Endothelial cell of umbilical vein (primary cell): ENCODE measurements at regions of chr17 and their contacts with region 1.

Region 1: GRCh38 chr17:1628856-1629646 is 417 bp upstream of the SLC43A2 start:
- DNase-seq: peak; percentile 94
- H3K4me3 ChIP-seq: peak overlapping the region; percentile 35 to 87 (median 53)
- H3K27ac ChIP-seq: peak overlapping the region; percentile 53
- H3K4me1 ChIP-seq: peaks cover 35% of the 10 kb centered on the region
- H3K27me3 ChIP-seq: no peaks in the 10 kb centered on the region
- CTCF ChIP-seq: peak in 1 of 2 donors; percentile 34
- POLR2A ChIP-seq: peak; percentile 37

Region 2: DNA sequence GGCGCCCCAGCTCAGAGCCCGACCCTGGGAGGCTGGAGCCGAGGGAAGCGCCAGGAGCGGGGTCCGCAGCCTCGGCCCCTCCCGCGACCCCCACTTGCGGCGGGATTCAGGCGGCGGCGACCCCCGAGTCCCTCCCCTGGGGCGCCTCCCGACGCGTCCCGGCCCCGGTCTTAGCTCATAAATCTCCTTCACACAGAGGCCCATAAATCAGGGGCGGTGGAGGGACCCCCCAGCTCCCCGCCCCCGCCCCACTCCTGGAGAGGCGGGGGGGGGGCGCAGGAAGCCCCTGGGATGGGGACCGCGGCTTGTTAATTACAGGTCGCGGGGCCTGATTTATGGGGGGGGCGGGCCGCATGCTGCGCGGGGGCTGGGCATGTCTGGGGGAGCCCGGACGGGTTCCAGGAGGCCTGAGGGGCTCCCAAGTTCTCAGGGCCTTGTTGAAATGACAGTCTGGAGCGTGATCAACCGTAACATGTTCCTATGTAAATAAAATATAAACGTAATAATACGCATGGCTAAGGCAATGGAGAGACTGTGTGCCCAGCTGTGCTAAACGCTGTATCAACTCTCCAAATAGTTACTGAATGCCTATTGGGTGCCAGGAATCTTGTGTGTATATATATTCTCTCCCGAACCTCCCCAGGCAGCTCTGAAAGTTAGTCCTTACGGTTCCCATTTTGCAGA is 368.8 kb before region 1 on chr17:
- CTCF ChIA-PET with region 1: interaction called, 9 read pairs
- POLR2A ChIA-PET with region 1: no interaction called
- dilution Hi-C with region 1: no loop called
- intact Hi-C with region 1: loop called (anchors 5 kb)
- DNase-seq: no peak
- H3K4me3 ChIP-seq: peak overlapping the region in 2 of 3 experiments; percentile 31 to 32
- H3K27ac ChIP-seq: no peak overlapping the region
- H3K4me1 ChIP-seq: no peaks in the 10 kb centered on the region
- H3K27me3 ChIP-seq: peaks cover 2 to 3% of the 10 kb centered on the region in 2 experiments
- CTCF ChIP-seq: no peak
- POLR2A ChIP-seq: no peak

Region 3: DNA sequence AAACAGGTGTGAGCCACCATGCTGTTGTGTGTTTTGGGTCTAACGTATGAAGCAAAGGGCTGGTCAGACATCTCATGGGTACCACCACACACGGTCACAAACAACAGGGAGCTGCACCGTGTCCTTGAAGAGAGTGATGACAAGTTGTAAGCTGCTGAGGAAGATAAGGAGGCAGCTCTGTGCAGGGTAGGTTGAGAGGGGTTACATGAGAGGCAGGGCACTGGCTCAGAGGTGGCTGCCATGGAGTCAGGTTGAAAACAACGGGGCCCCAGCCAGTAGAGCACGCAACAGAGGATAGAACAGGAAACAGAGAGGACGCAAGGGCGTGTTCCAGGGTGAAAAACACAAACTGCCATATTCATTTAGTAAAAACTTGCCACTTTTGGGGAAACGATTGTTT is 297.3 kb before region 1 on chr17:
- CTCF ChIA-PET with region 1: no interaction called
- POLR2A ChIA-PET with region 1: no interaction called
- dilution Hi-C with region 1: no loop called
- intact Hi-C with region 1: no loop called
- DNase-seq: no peak
- H3K4me3 ChIP-seq: no peak overlapping the region
- H3K27ac ChIP-seq: no peak overlapping the region
- H3K4me1 ChIP-seq: no peaks in the 10 kb centered on the region
- H3K27me3 ChIP-seq: no peaks in the 10 kb centered on the region
- CTCF ChIP-seq: no peak
- POLR2A ChIP-seq: no peak

Region 4: DNA sequence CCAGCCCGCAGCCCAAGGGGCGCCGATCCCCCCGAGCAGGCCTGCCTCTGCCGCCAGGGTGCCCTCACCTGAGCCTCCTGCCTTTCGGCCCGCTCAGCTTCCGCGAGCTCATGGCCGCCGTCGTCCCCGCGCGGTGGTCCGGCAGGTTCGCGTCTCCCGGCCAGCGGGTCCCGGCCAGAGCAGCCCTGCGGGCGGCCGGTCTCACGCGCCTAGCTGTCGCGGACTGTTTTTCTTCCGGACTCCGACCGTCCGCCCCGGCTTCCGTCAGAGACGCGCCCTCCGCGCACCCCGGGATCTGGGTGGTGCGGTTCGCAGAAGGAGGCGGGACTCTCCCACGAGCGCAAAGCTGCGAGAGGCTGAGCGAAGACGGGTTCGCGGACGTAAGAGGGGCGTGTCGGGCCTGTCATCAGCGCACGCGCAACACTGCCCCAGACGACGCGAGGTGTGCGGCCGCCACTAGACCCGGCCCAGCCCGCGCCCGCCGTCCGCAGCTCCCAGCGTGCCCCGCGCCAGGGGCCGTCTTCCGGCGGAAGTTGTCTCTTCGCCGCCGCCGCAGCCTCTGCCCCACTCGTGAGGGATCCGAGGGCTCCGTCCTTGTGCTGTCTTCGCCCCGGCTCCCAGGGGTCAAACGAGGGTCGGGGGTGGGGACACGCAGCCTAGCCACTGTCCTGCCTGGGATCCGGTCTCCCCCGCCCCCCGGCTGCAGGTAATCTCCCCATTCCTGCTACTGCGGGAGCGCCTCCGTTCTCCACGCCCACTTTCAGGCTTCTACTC is 112.5 kb before region 1 on chr17 and contains the start of gene INPP5K:
- CTCF ChIA-PET with region 1: interaction called, 11 read pairs
- POLR2A ChIA-PET with region 1: no interaction called
- dilution Hi-C with region 1: no loop called
- intact Hi-C with region 1: no loop called
- DNase-seq: peak; percentile 98
- H3K4me3 ChIP-seq: peak within 1 kb of the TSS; percentile 77 to 98 (median 89)
- H3K27ac ChIP-seq: peak within 1 kb of the TSS; percentile 75
- H3K4me1 ChIP-seq: peaks cover 23% of the 10 kb centered on the region
- H3K27me3 ChIP-seq: no peaks in the 10 kb centered on the region
- CTCF ChIP-seq: no peak
- POLR2A ChIP-seq: peak; percentile 86
- total RNA-seq, gene INPP5K: 41.3 and 44.2 TPM in 2 replicates

Region 5: GRCh38 chr17:1566545-1567199 is 62.4 kb before region 1 on chr17:
- CTCF ChIA-PET with region 1: interaction called, 459 read pairs
- POLR2A ChIA-PET with region 1: no interaction called
- dilution Hi-C with region 1: no loop called
- intact Hi-C with region 1: no loop called
- DNase-seq: no peak
- H3K4me3 ChIP-seq: no peak overlapping the region
- H3K27ac ChIP-seq: no peak overlapping the region
- H3K4me1 ChIP-seq: peaks cover under 1% of the 10 kb centered on the region
- H3K27me3 ChIP-seq: no peaks in the 10 kb centered on the region
- CTCF ChIP-seq: no peak
- POLR2A ChIP-seq: no peak

Region 6: GRCh38 chr17:1590031-1590748 is 38.9 kb before region 1 on chr17:
- CTCF ChIA-PET with region 1: interaction called, 17 read pairs
- POLR2A ChIA-PET with region 1: no interaction called
- dilution Hi-C with region 1: no loop called
- intact Hi-C with region 1: loop called (anchors 1 kb)
- DNase-seq: peak; percentile 95
- H3K4me3 ChIP-seq: no peak overlapping the region
- H3K27ac ChIP-seq: peak overlapping the region; percentile 73
- H3K4me1 ChIP-seq: peaks cover 18% of the 10 kb centered on the region
- H3K27me3 ChIP-seq: no peaks in the 10 kb centered on the region
- CTCF ChIP-seq: no peak
- POLR2A ChIP-seq: peak; percentile 58

Region 7: DNA sequence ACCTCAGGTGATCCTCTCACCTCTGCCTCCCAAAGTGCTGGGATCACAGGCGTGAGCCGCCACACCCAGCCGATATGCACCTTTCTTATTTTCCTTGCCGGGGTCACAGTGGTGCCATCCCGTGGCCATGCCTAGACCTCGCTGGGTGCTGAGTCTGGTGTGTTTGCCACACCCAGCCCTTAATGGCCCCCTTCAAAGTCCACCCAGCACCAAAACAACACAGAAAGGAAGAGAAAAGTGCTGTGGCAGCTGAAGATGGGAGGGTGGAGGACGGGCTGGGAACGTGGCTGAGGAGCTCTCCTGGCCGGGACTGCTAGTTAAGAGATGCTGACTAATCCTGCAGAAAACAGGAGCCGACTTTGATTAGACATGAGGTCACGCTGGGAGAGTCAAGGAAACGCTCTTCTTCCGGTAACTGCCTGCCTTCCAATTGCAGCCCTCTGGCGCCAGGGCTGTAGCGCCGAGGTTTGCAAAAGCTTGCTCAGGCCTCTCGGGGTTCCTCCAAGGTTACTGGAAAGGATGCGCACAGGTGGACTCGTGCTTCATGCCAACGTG is 11.4 kb before region 1 on chr17:
- CTCF ChIA-PET with region 1: interaction called, 26 read pairs
- POLR2A ChIA-PET with region 1: no interaction called
- dilution Hi-C with region 1: no loop called
- intact Hi-C with region 1: loop called (anchors 1 kb)
- DNase-seq: peak; percentile 87
- H3K4me3 ChIP-seq: no peak overlapping the region
- H3K27ac ChIP-seq: peak overlapping the region; percentile 80
- H3K4me1 ChIP-seq: peaks cover 19% of the 10 kb centered on the region
- H3K27me3 ChIP-seq: no peaks in the 10 kb centered on the region
- CTCF ChIP-seq: no peak
- POLR2A ChIP-seq: peak; percentile 52

Region 8: DNA sequence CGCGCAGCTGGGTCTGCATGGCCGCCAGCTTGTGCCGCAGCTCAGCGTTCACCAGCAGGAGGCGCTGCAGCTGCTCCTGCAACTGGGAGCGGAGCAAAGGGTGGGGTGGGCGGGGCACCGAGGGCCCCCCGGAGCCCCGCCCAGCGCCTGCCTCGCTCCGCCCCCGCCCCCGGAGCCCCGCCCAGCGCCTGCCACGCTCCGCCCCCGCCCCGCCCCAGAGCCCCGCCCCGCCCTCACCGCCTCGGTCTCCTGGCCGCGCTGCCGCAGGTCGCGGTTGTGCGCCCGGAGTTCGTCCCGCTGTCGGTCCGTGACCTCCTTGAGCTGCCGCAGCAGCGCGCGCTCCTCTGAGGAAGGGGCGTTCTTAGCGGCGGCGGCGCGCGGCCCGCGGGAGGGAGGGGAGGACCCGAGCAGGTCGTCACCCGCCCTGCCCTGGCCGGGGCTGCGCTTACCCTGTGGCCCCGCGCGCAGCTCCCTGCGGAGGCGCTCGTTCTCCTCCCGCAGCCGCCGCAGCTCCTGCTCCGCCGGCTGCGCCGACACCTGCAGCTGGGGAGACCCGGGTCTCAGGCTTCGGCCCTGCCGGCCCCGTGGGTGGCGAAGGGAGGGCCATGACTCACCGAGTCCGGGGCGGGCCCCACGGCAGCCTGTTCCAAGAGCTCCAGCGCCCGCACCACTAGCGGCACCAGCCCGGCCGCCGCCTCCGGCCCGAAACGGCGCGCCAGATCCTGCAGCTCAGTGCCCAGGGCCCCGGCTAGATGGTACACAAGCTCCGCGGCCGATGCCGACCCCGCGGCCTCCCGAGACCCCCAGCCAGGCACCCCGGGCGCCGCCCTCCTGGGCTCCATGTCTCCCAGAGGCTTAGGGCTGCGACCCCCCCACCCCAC is 20.2 kb after region 1 on chr17:
- CTCF ChIA-PET with region 1: interaction called, 26 read pairs
- POLR2A ChIA-PET with region 1: interaction called, 4 read pairs
- dilution Hi-C with region 1: no loop called
- intact Hi-C with region 1: loop called (anchors 1 kb)
- DNase-seq: peak; percentile 94
- H3K4me3 ChIP-seq: peak overlapping the region; percentile 10 to 52 (median 39)
- H3K27ac ChIP-seq: peak overlapping the region; percentile 54
- H3K4me1 ChIP-seq: peaks cover 40% of the 10 kb centered on the region
- H3K27me3 ChIP-seq: no peaks in the 10 kb centered on the region
- CTCF ChIP-seq: peak; percentile 63 to 94
- POLR2A ChIP-seq: peak; percentile 46

Region 9: DNA sequence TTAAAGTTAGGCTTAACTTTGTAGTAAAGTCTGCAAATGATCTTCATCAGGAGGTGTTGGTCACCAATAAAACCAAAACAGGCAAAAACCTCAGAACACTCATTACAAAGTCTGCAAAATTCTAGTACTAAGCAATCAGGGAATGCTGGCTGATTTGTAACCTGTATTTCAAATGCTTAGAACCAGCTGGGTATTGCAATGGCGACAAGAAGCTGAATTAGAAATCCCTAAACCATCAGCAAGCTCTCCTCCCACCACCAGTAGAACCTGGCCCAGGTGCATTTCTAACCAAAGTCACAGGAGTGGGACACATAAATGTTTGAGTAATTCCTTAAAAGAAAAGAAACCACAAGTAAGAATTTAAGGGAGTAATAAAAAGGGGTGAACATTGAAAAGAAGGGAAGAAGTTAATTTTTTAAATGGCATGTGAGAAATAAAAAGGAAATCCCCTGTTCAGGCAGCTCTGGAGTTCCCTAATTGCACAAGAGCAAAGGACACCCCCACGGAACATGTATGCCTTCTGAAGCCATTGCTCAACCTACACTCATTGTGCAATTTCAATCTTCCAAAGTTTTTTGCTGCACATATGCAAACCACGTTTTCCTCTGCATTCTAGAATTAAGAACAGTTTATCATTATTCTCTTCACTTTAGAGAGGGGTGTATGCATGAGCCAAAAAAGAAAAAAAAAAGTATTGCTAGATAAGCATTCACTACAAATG is 528.8 kb after region 1 on chr17:
- CTCF ChIA-PET with region 1: no interaction called
- POLR2A ChIA-PET with region 1: no interaction called
- dilution Hi-C with region 1: no loop called
- intact Hi-C with region 1: no loop called
- DNase-seq: no peak
- H3K4me3 ChIP-seq: no peak overlapping the region
- H3K27ac ChIP-seq: no peak overlapping the region
- H3K4me1 ChIP-seq: no peaks in the 10 kb centered on the region
- H3K27me3 ChIP-seq: no peaks in the 10 kb centered on the region
- CTCF ChIP-seq: no peak
- POLR2A ChIP-seq: no peak